H1 (cell line): ENCODE measurements at regions of chr2 and their contacts with region 1.

Region 1: GRCh38 chr2:46657042-46657504 is 177.7 kb downstream of the TMEM247 start:
- DNase-seq: no peak
- H3K4me3 ChIP-seq: no peak overlapping the region
- H3K27ac ChIP-seq: no peak overlapping the region
- H3K4me1 ChIP-seq: no peaks in the 10 kb centered on the region
- H3K27me3 ChIP-seq: no peaks in the 10 kb centered on the region
- CTCF ChIP-seq: peak in 2 of 3 experiments; percentile 77 to 78; a peak in 3 of 4 replicates
- EP300 ChIP-seq: no peak
- POLR2A ChIP-seq: no peak
- RAD21 ChIP-seq: peak; percentile 69 to 77

Region 2: GRCh38 chr2:46580416-46580815 is 76.7 kb before region 1 on chr2:
- CTCF ChIA-PET with region 1: no interaction called
- POLR2A ChIA-PET with region 1: no interaction called
- DNase-seq: no peak
- H3K4me3 ChIP-seq: no peak overlapping the region
- H3K27ac ChIP-seq: no peak overlapping the region
- H3K4me1 ChIP-seq: no peaks in the 10 kb centered on the region
- H3K27me3 ChIP-seq: no peaks in the 10 kb centered on the region
- CTCF ChIP-seq: no peak
- EP300 ChIP-seq: no peak
- POLR2A ChIP-seq: no peak
- RAD21 ChIP-seq: no peak

Region 3: GRCh38 chr2:46672752-46673151 is 15.7 kb after region 1 on chr2:
- CTCF ChIA-PET with region 1: interaction called, 10 read pairs
- POLR2A ChIA-PET with region 1: no interaction called
- DNase-seq: no peak
- H3K4me3 ChIP-seq: no peak overlapping the region
- H3K27ac ChIP-seq: no peak overlapping the region
- H3K4me1 ChIP-seq: no peaks in the 10 kb centered on the region; a peak in 1 of 7 replicates
- H3K27me3 ChIP-seq: no peaks in the 10 kb centered on the region
- CTCF ChIP-seq: peak in 1 of 3 experiments; percentile 5; a peak in 1 of 4 replicates
- EP300 ChIP-seq: no peak
- POLR2A ChIP-seq: no peak
- RAD21 ChIP-seq: no peak

Region 4: DNA sequence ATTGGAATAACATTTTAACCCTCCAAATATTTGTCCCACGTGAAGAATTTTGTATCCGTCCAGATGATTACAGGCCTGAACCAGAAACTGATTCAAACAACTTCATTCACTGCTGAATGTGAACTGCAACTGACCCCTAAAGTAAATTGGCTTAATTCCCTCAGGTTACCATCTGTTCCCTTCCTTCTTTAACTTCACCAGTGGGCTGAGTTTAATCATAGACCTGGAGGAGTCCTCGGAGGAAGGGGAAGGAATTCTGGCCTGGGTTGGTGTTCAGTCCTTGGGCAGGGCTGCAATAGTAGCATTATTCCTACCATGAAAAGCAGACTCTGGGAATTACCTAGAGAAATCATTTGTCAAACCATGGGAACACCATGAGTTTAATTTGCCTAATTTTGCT is 29.7 kb after region 1 on chr2:
- CTCF ChIA-PET with region 1: interaction called, 10 read pairs
- POLR2A ChIA-PET with region 1: no interaction called
- DNase-seq: no peak
- H3K4me3 ChIP-seq: no peak overlapping the region
- H3K27ac ChIP-seq: no peak overlapping the region
- H3K4me1 ChIP-seq: no peaks in the 10 kb centered on the region
- H3K27me3 ChIP-seq: no peaks in the 10 kb centered on the region
- CTCF ChIP-seq: no peak
- EP300 ChIP-seq: no peak
- POLR2A ChIP-seq: no peak
- RAD21 ChIP-seq: no peak

Region 5: DNA sequence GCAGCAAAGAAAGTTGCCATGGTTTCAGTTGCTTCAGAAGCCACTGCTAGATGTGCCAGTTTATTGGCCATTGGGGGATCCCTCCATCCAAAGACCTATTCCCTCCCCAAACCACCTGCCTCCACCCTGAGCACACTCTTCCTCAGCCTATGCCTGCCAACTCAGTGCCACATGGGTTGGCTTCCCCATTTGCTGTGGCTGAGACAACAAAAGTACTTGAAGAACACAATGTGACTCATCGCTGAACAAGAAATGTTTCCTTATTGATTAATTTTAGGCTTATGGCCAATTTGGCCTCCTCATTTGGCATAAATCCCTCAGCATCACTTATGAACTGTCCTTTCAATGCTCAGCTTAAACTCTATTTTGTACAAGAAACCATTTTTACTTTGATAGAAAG is 38.2 kb after region 1 on chr2:
- CTCF ChIA-PET with region 1: interaction called, 12 read pairs
- POLR2A ChIA-PET with region 1: no interaction called
- DNase-seq: no peak
- H3K4me3 ChIP-seq: no peak overlapping the region
- H3K27ac ChIP-seq: no peak overlapping the region
- H3K4me1 ChIP-seq: peaks cover 0 to 4% (median 0%) of the 10 kb centered on the region in 4 experiments; a peak in 2 of 7 replicates
- H3K27me3 ChIP-seq: no peaks in the 10 kb centered on the region
- CTCF ChIP-seq: no peak
- EP300 ChIP-seq: no peak
- POLR2A ChIP-seq: no peak
- RAD21 ChIP-seq: no peak